ENCODE measurements at regions of chrX and their contacts with region 1.

Region 1: GRCh38 chrX:118614150-118614549 is 113.3 kb upstream of the IL13RA1 start:
- DNase-seq: no peak
- H3K4me3 Mint-ChIP-seq: no peak overlapping the region
- H3K27ac Mint-ChIP-seq: no peak overlapping the region
- H3K4me1 Mint-ChIP-seq: peaks cover 2% of the 10 kb centered on the region
- H3K27me3 Mint-ChIP-seq: no peaks in the 10 kb centered on the region

Region 2: DNA sequence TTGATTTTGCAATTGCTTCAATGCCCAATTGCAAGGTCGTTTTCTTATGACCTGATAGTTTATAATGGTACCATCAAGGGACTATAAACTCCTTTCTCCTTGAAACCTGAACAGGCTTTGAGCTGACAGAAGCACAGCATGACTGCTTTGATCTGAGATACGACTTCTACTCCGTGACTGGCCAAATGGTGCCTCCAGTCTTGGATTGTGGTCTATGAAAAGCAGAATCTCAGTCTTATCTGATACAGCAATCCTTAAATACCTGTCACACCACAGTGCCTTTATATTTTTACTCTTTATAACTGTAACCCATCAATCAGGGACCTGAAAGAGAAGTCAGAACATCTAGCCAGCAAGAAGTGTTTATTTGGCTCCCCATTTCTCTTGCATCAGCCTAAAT is 25.4 kb before region 1 on chrX:
- CTCF ChIA-PET with region 1: no interaction called
- POLR2A ChIA-PET with region 1: no interaction called
- intact Hi-C with region 1: loop called (anchors 2 kb)
- DNase-seq: no peak
- H3K4me3 Mint-ChIP-seq: no peak overlapping the region
- H3K27ac Mint-ChIP-seq: peak overlapping the region; percentile 43
- H3K4me1 Mint-ChIP-seq: peaks cover 18% of the 10 kb centered on the region
- H3K27me3 Mint-ChIP-seq: no peaks in the 10 kb centered on the region